ENCODE measurements at regions of chr19 and their contacts with region 1.

Region 1: DNA sequence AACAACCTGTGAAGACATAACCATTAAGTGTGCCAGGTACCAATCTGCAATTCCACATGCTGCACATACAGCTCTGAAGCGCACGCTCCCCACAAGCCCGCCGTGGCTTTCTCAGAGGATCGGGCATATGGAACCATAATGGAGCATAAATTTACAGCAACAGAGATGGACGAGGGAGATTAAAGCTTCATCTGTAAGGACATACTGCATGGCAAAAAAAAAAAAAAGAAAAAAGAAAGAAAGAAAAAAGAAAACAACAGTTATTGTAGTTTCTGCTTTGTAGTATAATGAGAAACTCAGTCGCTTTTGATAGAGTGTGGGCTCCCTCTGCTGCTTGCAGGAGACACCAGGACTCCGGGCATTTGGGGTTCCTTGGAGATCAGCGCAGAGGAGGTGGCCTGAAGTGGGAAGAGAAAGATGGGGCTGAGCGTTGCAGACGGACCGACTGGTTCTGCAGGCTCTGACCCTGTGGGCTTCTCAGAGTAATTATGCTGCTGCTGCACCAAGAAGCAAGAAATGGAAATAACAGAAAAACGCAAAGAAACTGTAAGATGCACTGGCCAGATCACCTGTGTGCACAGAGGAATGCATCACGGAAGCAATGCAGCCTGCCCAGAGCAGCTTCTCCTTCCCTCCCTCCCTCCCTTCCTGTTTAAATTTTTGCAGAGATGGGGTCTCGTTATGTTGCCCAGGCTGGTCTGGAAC is 10.8 kb upstream of the PDCD5 start:
- DNase-seq: peak; percentile 74
- H3K4me3 ChIP-seq: no peak overlapping the region
- H3K27ac ChIP-seq: no peak overlapping the region
- H3K4me1 ChIP-seq: no peaks in the 10 kb centered on the region
- H3K27me3 ChIP-seq: no peaks in the 10 kb centered on the region
- CTCF ChIP-seq: peak; percentile 89

Region 2: DNA sequence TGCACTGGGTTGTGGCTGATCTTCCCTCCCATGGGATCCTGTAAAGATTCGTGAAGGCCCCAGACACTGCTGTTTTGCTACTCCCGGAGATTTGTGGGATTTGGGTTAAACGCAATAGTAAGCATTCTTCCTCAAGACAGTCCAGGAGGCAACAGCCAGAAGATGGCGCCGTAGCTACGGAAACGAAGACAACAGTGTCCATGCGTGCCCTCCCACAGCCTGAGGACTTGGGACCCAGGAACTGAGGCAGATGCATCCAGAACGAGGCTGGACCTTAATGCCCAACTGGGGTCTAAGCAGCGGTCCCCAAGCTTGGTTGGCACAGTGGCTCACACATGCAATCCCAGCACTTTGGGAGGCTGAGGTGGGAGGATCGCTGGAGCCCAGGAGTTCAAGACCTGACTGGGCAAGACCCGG is 282.4 kb before region 1 on chr19:
- CTCF ChIA-PET with region 1: interaction called, 4 read pairs
- POLR2A ChIA-PET with region 1: no interaction called
- intact Hi-C with region 1: loop called (anchors 5 kb)
- DNase-seq: peak; percentile 84
- H3K4me3 ChIP-seq: no peak overlapping the region
- H3K27ac ChIP-seq: no peak overlapping the region
- H3K4me1 ChIP-seq: peaks cover 3% of the 10 kb centered on the region
- H3K27me3 ChIP-seq: no peaks in the 10 kb centered on the region
- CTCF ChIP-seq: peak; percentile 74

Region 3: DNA sequence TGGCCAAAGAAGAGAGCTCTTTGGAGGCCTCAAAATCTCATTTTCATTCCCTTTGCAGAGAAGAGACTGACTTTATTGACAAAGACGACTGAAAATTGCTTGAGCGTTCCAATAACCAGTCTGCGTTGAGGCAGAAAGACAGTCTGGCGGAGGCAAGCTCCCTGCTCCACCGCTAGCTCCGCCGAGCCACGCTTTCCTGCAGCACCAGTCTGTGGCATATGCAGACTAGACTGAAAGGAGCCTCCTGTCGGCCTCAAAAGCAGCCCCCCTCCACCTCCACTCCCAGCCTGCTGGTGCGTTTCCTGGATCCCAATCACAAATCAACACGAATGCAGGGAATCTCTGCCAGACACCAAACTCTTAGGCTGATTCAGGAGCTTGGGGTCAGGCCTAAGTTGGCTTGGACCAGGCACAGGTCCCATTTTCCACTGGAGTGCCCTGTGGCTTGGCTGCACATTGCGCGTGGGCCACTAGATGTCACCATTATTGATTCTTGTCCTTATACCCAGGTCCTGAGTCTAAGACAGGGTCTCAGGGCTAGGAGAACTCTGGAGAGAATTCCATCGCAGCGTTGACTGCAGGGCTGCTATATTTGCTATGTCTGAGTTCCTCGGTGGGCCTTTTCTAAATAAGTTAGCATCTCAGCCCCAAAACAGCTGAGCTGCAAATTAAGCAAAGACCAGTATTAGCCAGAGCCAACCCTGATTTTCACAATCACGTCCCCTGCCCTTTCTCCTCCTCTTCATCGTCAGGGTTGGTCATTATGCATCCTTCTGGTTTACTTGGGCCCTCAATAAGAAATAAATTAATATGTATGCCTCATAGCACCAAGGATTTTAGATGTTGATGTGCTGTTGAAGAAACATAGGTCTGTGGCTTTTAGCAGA is 230.0 kb before region 1 on chr19:
- CTCF ChIA-PET with region 1: interaction called, 8 read pairs
- POLR2A ChIA-PET with region 1: no interaction called
- intact Hi-C with region 1: loop called (anchors 2 kb)
- DNase-seq: peak; percentile 57
- H3K4me3 ChIP-seq: no peak overlapping the region
- H3K27ac ChIP-seq: no peak overlapping the region
- H3K4me1 ChIP-seq: no peaks in the 10 kb centered on the region
- H3K27me3 ChIP-seq: no peaks in the 10 kb centered on the region
- CTCF ChIP-seq: peak; percentile 79

Region 4: DNA sequence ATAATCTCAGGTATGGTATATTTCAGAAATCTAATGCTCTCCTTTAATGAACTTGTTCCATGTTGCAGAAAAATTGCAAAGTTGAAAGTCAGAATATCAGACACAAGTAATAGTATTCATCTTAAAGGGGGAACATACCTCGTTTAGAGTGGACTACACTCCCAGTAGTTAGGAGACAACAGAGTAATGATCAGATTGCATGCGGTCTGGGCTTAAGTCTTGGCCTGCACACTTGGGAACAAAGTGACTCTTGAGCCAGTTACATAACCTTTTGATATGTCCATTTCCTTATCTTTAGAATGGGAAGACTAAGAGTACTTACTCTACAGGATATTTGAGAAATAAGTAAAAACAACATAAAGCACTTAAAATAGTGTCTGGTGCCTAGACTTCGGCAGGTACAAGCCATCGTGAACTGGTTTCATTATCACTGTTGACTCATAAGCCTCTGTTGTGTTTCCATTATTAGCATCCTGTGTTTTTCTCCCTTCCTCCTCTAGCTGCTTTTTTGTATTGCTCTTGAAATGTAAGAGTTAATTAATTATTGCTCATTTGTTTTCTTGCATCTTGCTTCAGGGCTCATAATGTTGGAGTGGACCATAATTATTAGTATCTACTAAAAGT is 111.6 kb before region 1 on chr19:
- CTCF ChIA-PET with region 1: no interaction called
- POLR2A ChIA-PET with region 1: no interaction called
- intact Hi-C with region 1: loop called (anchors 5 kb)
- DNase-seq: no peak
- H3K4me3 ChIP-seq: no peak overlapping the region
- H3K27ac ChIP-seq: peak overlapping the region; percentile 6
- H3K4me1 ChIP-seq: peaks cover 20% of the 10 kb centered on the region
- H3K27me3 ChIP-seq: no peaks in the 10 kb centered on the region
- CTCF ChIP-seq: no peak

Measured in A673 (cell line).